ENCODE measurements at regions of chr2 and their contacts with region 1.

Region 1: DNA sequence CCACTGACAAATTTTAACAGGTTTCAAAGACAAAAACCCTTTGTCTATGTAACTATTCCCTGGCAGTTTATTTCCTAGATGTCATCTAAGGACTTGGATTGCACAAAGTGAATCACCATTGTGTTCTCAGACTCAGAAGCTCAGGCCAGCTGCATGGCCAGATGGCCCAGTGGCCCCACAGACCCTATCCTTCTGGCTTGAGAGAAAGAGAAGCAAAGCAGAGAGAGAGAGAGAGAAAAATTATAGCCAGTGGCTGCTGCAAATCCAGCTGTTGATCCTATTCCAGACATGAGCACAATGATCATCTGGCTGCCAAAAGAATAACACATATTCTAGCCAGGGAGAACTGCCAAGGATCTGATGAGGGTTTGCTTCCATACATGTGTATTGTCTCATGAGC is 25.8 kb downstream of the CTLA4 start:
- DNase-seq: no peak
- H3K4me3 Mint-ChIP-seq: no peak overlapping the region
- H3K27ac Mint-ChIP-seq: no peak overlapping the region
- H3K4me1 Mint-ChIP-seq: peaks cover 67% of the 10 kb centered on the region
- H3K27me3 Mint-ChIP-seq: no peaks in the 10 kb centered on the region

Region 2: DNA sequence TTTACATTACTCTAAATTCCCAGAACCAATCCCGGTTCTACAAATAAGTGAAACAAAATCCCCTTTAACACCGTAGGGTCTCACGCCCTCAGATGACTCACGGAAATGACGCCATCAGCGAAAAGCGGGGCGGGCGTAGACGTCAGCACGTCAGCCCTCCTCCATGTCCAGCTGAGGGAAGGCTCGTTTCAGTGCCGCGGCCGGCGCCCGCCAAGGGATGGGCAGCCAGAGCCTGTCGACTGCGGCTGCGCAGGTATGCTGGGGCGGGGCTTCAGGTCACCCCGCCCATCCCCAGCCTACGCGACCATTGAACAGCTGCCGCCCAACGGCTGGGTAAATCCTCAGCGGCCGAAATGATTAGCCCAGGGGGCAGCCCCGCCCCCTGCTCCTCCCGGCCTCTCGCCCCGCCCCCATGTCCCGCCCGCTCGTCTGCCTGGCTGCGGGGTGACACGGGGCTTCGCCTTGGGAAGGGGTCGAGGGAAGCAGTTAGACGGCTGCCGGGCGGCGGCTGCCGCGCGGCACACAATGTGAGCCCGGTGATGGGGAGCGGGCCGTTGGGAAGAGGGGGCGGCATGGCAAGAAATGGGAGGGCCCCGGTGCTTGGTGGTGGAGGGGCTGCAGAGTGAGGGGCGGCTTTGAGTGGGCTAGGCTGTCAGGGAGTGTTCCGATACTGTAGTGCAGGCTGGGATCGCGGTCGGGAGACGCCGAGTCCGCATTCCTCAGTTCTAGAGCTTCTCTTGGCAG is 878.8 kb before region 1 on chr2 and contains the start of gene NBEAL1:
- CTCF ChIA-PET with region 1: no interaction called
- intact Hi-C with region 1: loop called (anchors 10 kb)
- DNase-seq: peak; percentile 97
- H3K4me3 Mint-ChIP-seq: peak within 1 kb of the TSS; percentile 95
- H3K27ac Mint-ChIP-seq: peak within 1 kb of the TSS; percentile 74
- H3K4me1 Mint-ChIP-seq: peaks cover 27% of the 10 kb centered on the region
- H3K27me3 Mint-ChIP-seq: no peaks in the 10 kb centered on the region
- total RNA-seq, gene NBEAL1: 7.9 to 8.3 TPM

Region 3: DNA sequence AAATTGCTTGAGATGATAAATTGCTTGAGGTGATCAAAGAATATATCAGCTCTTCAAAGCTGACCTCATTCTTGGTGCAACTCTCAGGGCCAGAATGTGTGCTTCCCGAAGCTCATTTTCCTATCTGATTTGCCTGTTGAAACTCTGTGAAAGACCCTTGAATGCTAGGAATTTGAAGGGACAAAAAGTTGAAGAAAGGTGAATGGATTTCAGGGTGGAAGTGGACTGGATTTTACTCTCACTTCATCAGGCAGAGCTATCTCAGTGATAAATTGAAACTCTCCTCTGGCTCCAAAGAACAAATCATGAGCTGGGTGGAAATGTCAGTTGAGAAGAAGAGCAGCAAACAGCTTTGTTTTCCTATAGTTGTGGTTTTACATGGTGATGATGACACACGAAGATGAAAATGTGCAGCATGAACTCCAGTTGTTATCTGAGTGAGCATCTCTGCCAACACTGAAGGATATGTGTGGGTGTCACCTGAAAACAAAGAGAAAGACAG is 152.6 kb before region 1 on chr2:
- CTCF ChIA-PET with region 1: no interaction called
- intact Hi-C with region 1: loop called (anchors 2 kb)
- DNase-seq: peak; percentile 69
- H3K4me3 Mint-ChIP-seq: peak overlapping the region; percentile 54
- H3K27ac Mint-ChIP-seq: peak overlapping the region; percentile 97
- H3K4me1 Mint-ChIP-seq: peaks cover 88% of the 10 kb centered on the region
- H3K27me3 Mint-ChIP-seq: no peaks in the 10 kb centered on the region

Region 4: GRCh38 chr2:203804070-203804469 is 89.3 kb before region 1 on chr2:
- CTCF ChIA-PET with region 1: no interaction called
- intact Hi-C with region 1: no loop called
- DNase-seq: peak; percentile 55
- H3K4me3 Mint-ChIP-seq: no peak overlapping the region
- H3K27ac Mint-ChIP-seq: peak overlapping the region; percentile 27
- H3K4me1 Mint-ChIP-seq: peaks cover 75% of the 10 kb centered on the region
- H3K27me3 Mint-ChIP-seq: no peaks in the 10 kb centered on the region

Region 5: DNA sequence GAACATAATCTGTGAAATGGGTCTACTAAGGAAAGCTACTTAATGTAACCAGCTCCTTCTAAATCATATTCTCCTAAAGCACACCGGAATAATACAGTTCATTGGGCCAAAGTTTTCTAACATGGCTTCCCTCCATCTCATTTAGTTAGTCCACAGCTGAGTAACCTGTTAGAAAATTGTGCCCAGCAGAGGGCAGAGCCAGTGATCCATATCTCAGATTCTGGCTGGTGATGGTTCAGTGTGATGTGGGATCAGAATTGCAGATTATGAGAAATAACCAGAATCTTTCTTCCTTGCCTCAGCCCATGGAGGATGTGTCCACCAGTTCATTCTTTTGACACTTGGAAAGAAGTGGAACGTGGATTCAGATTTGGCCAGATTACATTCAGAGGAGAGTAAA is 35.2 kb before region 1 on chr2:
- CTCF ChIA-PET with region 1: interaction called, 5 read pairs
- intact Hi-C with region 1: loop called (anchors 1 kb)
- DNase-seq: peak; percentile 65
- H3K4me3 Mint-ChIP-seq: no peak overlapping the region
- H3K27ac Mint-ChIP-seq: peak overlapping the region; percentile 60
- H3K4me1 Mint-ChIP-seq: peaks cover 85% of the 10 kb centered on the region
- H3K27me3 Mint-ChIP-seq: no peaks in the 10 kb centered on the region

Region 6: DNA sequence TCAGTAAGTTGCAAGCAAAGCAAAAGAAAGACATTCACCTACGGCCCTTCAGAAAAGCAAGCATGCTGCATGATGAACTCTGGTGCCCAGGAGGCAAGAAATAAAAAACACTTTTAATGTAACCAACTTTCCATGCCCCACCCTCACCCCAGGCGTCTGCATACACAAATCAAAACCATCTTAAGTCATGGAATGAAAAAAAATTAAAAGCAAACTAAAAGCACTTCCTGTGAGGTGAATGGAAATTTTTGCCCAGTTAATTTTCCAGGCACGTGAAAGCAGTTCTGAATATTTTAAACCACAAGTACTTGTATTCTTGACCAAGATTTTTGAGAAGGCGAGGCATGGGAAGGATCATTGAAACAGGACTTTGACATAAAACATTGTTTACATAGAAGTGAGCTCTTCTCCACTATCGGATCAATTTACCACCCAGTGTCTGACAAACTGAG is 40.7 kb after region 1 on chr2:
- CTCF ChIA-PET with region 1: interaction called, 3 read pairs
- intact Hi-C with region 1: loop called (anchors 1 kb)
- DNase-seq: peak; percentile 78
- H3K4me3 Mint-ChIP-seq: peak overlapping the region; percentile 51
- H3K27ac Mint-ChIP-seq: peak overlapping the region; percentile 96
- H3K4me1 Mint-ChIP-seq: peaks cover 64% of the 10 kb centered on the region
- H3K27me3 Mint-ChIP-seq: no peaks in the 10 kb centered on the region